Natural killer cell (primary cell): ENCODE measurements at regions of chr14 and their contacts with region 1.

Region 1: GRCh38 chr14:55354500-55354899 is 57.1 kb downstream of the ATG14 start:
- DNase-seq: peak; percentile 42 to 85
- ATAC-seq: peak; percentile 90 to 95 (median 94)
- H3K4me3 ChIP-seq: no peak overlapping the region
- H3K4me3 Mint-ChIP-seq: peak overlapping the region; percentile 76
- H3K27ac ChIP-seq: peak overlapping the region; percentile 59
- H3K27ac Mint-ChIP-seq: peak overlapping the region; percentile 90
- H3K4me1 ChIP-seq: peaks cover 14% of the 10 kb centered on the region
- H3K4me1 Mint-ChIP-seq: peaks cover 15 to 28% of the 10 kb centered on the region in 2 donors
- H3K27me3 ChIP-seq: no peaks in the 10 kb centered on the region
- H3K27me3 Mint-ChIP-seq: no peaks in the 10 kb centered on the region
- CTCF ChIP-seq: peak; percentile 76

Region 2: DNA sequence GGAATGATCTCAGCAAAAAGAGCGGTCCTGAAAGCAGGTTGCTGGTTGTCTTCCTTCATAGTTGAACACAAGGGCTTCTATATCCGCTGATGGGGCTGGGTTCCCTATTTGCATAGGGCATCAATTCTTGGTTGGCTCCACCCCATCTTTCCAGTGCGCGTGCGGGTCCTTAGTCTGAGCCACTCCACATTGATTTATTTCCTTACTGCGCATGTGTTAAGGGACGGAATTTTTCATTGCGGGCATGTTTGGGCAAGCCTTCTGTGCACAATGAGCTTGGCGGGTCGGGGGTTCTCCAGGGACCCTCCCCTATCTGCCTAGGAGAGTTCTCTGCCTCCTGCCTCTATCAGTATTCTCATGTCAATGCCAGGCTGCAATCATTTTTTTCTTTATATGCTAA is 141.9 kb before region 1 on chr14:
- intact Hi-C with region 1: loop called (anchors 1 kb)
- DNase-seq: peak in 1 of 2 donors; percentile 5
- ATAC-seq: no peak
- H3K4me3 ChIP-seq: no peak overlapping the region
- H3K4me3 Mint-ChIP-seq: no peak overlapping the region
- H3K27ac ChIP-seq: no peak overlapping the region
- H3K27ac Mint-ChIP-seq: no peak overlapping the region
- H3K4me1 ChIP-seq: no peaks in the 10 kb centered on the region
- H3K4me1 Mint-ChIP-seq: peaks cover 0 to 5% of the 10 kb centered on the region in 2 donors
- H3K27me3 ChIP-seq: no peaks in the 10 kb centered on the region
- H3K27me3 Mint-ChIP-seq: no peaks in the 10 kb centered on the region
- CTCF ChIP-seq: no peak

Region 3: GRCh38 chr14:55245657-55246268 is 108.7 kb before region 1 on chr14:
- intact Hi-C with region 1: loop called (anchors 1 kb)
- DNase-seq: peak in 1 of 2 donors; percentile 70
- ATAC-seq: peak in 2 of 3 donors; percentile 65 to 72
- H3K4me3 ChIP-seq: no peak overlapping the region
- H3K4me3 Mint-ChIP-seq: no peak overlapping the region
- H3K27ac ChIP-seq: no peak overlapping the region
- H3K27ac Mint-ChIP-seq: no peak overlapping the region
- H3K4me1 ChIP-seq: no peaks in the 10 kb centered on the region
- H3K4me1 Mint-ChIP-seq: no peaks in the 10 kb centered on the region
- H3K27me3 ChIP-seq: no peaks in the 10 kb centered on the region
- H3K27me3 Mint-ChIP-seq: peaks cover 29 to 51% of the 10 kb centered on the region in 2 donors
- CTCF ChIP-seq: peak; percentile 65

Region 4: GRCh38 chr14:55270832-55271565 is 83.5 kb before region 1 on chr14 and contains the start of gene FBXO34:
- intact Hi-C with region 1: loop called (anchors 1 kb)
- DNase-seq: peak; percentile 99 to 100
- ATAC-seq: peak; percentile 89 to 98 (median 90)
- H3K4me3 ChIP-seq: peak within 1 kb of the TSS; percentile 99
- H3K4me3 Mint-ChIP-seq: peak within 1 kb of the TSS; percentile 92
- H3K27ac ChIP-seq: peak within 1 kb of the TSS; percentile 98
- H3K27ac Mint-ChIP-seq: peak within 1 kb of the TSS; percentile 90 to 94
- H3K4me1 ChIP-seq: peaks cover 9% of the 10 kb centered on the region
- H3K4me1 Mint-ChIP-seq: peaks cover 33 to 38% of the 10 kb centered on the region in 2 donors
- H3K27me3 ChIP-seq: no peaks in the 10 kb centered on the region
- H3K27me3 Mint-ChIP-seq: no peaks in the 10 kb centered on the region
- CTCF ChIP-seq: peak; percentile 97
- total RNA-seq, gene FBXO34: 34.7 to 39.3 (median 36.6) TPM

Region 5: DNA sequence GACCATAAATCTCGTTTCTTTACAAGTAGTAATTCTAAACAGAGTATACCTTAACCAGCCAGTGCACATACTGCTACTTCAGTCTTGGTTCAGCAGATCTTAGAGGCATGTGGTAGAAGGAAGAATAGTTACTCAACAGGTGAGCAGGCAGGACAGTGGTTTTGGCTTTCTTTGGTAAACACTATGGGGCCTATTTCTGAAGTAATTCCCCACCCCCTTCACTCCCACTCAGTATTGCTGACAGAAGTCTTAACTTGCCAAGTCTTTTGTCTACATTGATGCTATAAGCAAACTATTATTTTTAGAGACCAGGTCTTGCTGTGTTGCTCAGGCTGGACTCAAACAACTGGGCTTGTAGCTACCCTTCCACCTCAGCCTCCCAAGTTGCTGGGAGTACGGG is 14.7 kb before region 1 on chr14:
- intact Hi-C with region 1: loop called (anchors 2 kb)
- DNase-seq: peak in 1 of 2 donors; percentile 29
- ATAC-seq: no peak
- H3K4me3 ChIP-seq: no peak overlapping the region
- H3K4me3 Mint-ChIP-seq: no peak overlapping the region
- H3K27ac ChIP-seq: peak overlapping the region; percentile 24
- H3K27ac Mint-ChIP-seq: peak overlapping the region; percentile 70 to 91
- H3K4me1 ChIP-seq: peaks cover 39% of the 10 kb centered on the region
- H3K4me1 Mint-ChIP-seq: peaks cover 73 to 82% of the 10 kb centered on the region in 2 donors
- H3K27me3 ChIP-seq: no peaks in the 10 kb centered on the region
- H3K27me3 Mint-ChIP-seq: no peaks in the 10 kb centered on the region
- CTCF ChIP-seq: no peak